ENCODE measurements at regions of chr11 and their contacts with region 1.

Region 1: DNA sequence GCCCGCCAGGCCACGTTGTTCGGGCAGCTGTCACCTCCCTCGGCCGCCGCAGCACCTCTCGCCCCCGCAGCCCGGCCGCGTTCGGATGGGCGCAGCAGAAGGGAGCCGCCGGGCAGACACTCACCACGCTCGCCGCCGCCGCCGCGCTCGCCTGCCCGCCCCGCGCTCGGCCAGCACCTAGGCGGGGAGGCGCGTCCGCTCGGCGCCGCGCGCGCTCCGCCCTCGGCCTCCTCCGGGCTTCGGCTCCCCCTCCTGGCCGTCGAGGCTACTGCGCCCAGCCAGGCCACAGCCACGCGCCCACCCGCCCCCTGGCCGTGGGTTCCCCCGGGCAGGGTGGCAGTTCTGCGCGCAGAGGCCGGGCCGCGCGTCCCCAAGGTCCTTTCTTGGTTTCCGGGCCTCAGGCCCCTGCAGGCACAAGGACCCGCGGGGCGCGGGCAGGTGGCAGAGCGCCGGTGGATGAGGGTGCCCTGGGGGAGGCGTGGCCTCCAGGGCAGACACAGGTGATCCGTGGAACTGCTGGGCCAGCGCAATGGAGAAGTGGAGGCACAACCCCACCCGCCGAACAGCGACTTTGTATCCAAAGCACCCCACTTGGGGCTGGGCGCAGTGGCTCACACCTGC is at the start of gene SLC25A22:
- DNase-seq: peak; percentile 94
- ATAC-seq: peak; percentile 78
- H3K4me3 ChIP-seq: peak within 1 kb of the TSS; percentile 19 to 95 (median 93)
- H3K4me3 Mint-ChIP-seq: peak within 1 kb of the TSS; percentile 95
- H3K27ac ChIP-seq: peak within 1 kb of the TSS; percentile 83 to 93
- H3K27ac Mint-ChIP-seq: peak within 1 kb of the TSS; percentile 92
- H3K4me1 ChIP-seq: peaks cover 17 to 35% of the 10 kb centered on the region in 2 donors
- H3K4me1 Mint-ChIP-seq: peaks cover 20% of the 10 kb centered on the region
- H3K27me3 ChIP-seq: no peaks in the 10 kb centered on the region
- H3K27me3 Mint-ChIP-seq: no peaks in the 10 kb centered on the region
- CTCF ChIP-seq: peak; percentile 85
- total RNA-seq, gene SLC25A22: 25.7 and 28.2 TPM in 2 replicates

Region 2: GRCh38 chr11:207208-207862 is 590.9 kb before region 1 on chr11 and contains the starts of genes BET1L and RIC8A:
- CTCF ChIA-PET with region 1: no interaction called
- POLR2A ChIA-PET with region 1: no interaction called
- intact Hi-C with region 1: loop called (anchors 5 kb)
- DNase-seq: peak; percentile 99
- ATAC-seq: peak; percentile 79
- H3K4me3 ChIP-seq: peak within 1 kb of the TSS; percentile 87 to 98 (median 91)
- H3K4me3 Mint-ChIP-seq: peak within 1 kb of the TSS; percentile 98
- H3K27ac ChIP-seq: peak within 1 kb of the TSS; percentile 96 to 98
- H3K27ac Mint-ChIP-seq: peak within 1 kb of the TSS; percentile 100
- H3K4me1 ChIP-seq: peaks cover 26 to 43% of the 10 kb centered on the region in 2 donors
- H3K4me1 Mint-ChIP-seq: peaks cover 53% of the 10 kb centered on the region
- H3K27me3 ChIP-seq: no peaks in the 10 kb centered on the region
- H3K27me3 Mint-ChIP-seq: no peaks in the 10 kb centered on the region
- CTCF ChIP-seq: no peak
- total RNA-seq, gene BET1L: 69.1 and 72.2 TPM in 2 replicates
- total RNA-seq, gene RIC8A: 102 and 110 TPM in 2 replicates

Region 3: GRCh38 chr11:727859-728748 is 70.1 kb before region 1 on chr11:
- CTCF ChIA-PET with region 1: interaction called, 5 read pairs
- POLR2A ChIA-PET with region 1: no interaction called
- intact Hi-C with region 1: loop called (anchors 5 kb)
- DNase-seq: peak; percentile 85
- ATAC-seq: peak; percentile 85
- H3K4me3 ChIP-seq: no peak overlapping the region
- H3K4me3 Mint-ChIP-seq: no peak overlapping the region
- H3K27ac ChIP-seq: no peak overlapping the region
- H3K27ac Mint-ChIP-seq: no peak overlapping the region
- H3K4me1 ChIP-seq: peaks cover 14 to 29% of the 10 kb centered on the region in 2 donors
- H3K4me1 Mint-ChIP-seq: peaks cover 12% of the 10 kb centered on the region
- H3K27me3 ChIP-seq: peaks cover 0 to 24% (median 0%) of the 10 kb centered on the region in 4 experiments
- H3K27me3 Mint-ChIP-seq: peaks cover 4% of the 10 kb centered on the region
- CTCF ChIP-seq: peak; percentile 97

Region 4: GRCh38 chr11:765025-765801 is 33.0 kb before region 1 on chr11:
- CTCF ChIA-PET with region 1: no interaction called
- POLR2A ChIA-PET with region 1: no interaction called
- intact Hi-C with region 1: no loop called
- DNase-seq: peak; percentile 81
- ATAC-seq: peak; percentile 86
- H3K4me3 ChIP-seq: no peak overlapping the region
- H3K4me3 Mint-ChIP-seq: no peak overlapping the region
- H3K27ac ChIP-seq: peak overlapping the region in 1 of 2 donors; percentile 12
- H3K27ac Mint-ChIP-seq: peak overlapping the region; percentile 50
- H3K4me1 ChIP-seq: no peaks in the 10 kb centered on the region
- H3K4me1 Mint-ChIP-seq: peaks cover 2% of the 10 kb centered on the region
- H3K27me3 ChIP-seq: no peaks in the 10 kb centered on the region
- H3K27me3 Mint-ChIP-seq: no peaks in the 10 kb centered on the region
- CTCF ChIP-seq: peak; percentile 74

Region 5: DNA sequence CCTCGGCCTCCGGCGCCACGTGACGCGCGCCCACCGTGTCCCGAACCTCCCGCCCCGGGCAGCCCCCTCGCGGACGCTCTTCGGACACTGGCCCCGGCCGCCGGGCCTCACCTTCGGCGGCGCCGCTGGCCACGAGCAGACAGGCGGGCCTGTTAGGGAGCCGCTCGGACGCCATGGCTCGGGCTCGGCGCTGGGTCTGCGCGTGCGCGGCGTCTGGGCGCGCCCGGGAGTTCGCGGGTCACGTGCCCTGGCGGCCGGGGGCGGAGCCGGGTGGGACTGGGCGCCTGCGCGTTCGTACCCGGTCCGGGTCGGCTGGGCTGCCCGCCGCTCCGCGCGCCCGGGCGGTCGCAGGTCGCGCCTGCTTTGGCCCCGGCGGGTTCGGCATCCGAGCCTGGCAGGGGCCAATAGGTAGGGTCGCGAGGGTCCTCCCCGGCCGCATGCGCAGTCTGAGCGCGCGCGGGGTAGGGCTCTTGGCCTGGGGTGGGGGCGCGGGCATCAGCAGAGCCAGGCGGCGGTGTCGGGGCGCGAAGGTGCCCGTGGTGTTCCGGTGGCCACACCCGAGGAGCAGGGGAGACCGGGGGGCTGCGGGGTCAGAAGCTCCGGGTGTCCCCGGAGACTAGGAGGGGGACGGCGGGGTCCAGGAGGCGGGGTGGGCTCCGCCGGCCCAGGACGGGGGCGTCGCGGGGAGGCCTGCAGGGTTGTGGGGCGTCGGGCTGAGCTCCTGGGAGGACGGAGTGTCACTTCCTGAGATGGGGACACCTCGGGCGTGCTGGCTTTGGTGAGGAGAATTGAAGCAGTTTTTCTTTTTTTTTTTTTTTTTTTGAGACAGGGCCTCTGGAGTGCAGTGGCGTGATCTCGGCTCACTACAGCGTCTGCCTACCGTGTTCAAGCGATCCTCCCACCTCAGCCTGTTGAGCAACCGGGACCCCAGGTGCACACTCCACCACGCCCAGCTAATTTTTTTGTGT is 20.6 kb before region 1 on chr11 and contains the start of gene GATD1:
- CTCF ChIA-PET with region 1: interaction called, 4 read pairs
- POLR2A ChIA-PET with region 1: interaction called, 6 read pairs
- intact Hi-C with region 1: loop called (anchors 1 kb)
- DNase-seq: peak; percentile 94
- ATAC-seq: peak; percentile 89
- H3K4me3 ChIP-seq: peak within 1 kb of the TSS; percentile 18 to 80 (median 73)
- H3K4me3 Mint-ChIP-seq: peak within 1 kb of the TSS; percentile 80
- H3K27ac ChIP-seq: peak within 1 kb of the TSS; percentile 12 to 76
- H3K27ac Mint-ChIP-seq: peak within 1 kb of the TSS; percentile 63
- H3K4me1 ChIP-seq: peaks cover 12 to 24% of the 10 kb centered on the region in 2 donors
- H3K4me1 Mint-ChIP-seq: peaks cover 18% of the 10 kb centered on the region
- H3K27me3 ChIP-seq: no peaks in the 10 kb centered on the region
- H3K27me3 Mint-ChIP-seq: no peaks in the 10 kb centered on the region
- CTCF ChIP-seq: no peak
- total RNA-seq, gene GATD1: 70.0 and 80.0 TPM in 2 replicates

Region 6: DNA sequence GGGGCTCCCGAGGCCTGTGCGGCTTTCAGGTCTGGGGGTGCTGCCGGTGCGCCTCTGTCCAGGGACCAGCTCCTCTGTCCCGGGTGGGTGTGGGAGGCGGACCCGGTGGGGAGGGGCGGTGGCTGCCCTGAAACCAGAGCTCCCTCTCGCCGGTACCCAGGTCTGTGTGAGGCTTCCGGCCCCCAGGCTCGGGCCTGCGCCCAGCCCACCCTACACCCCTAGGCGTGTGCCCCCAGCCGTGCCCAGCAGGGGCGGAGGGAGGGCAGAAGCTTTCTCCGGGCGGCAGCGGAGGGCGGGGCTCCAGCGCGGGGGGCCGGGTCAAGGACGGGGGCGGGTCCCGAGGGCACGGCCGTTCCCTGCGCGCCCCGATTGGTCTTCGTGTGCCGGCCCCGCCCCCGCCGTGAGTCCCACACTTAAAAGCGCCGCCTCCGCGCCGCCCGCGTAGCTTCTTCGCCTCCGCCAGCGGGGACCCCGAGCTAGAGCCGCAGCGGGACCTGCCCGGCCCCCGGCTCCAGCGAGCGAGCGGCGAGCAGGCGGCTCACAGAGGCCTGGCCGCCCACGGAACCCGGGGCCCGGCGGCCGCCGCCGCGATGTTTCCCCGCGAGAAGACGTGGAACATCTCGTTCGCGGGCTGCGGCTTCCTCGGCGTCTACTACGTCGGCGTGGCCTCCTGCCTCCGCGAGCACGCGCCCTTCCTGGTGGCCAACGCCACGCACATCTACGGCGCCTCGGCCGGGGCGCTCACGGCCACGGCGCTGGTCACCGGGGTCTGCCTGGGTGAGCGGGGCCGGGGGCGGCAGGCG is 21.1 kb after region 1 on chr11:
- CTCF ChIA-PET with region 1: interaction called, 4 read pairs
- POLR2A ChIA-PET with region 1: interaction called, 5 read pairs
- intact Hi-C with region 1: loop called (anchors 1 kb)
- DNase-seq: peak; percentile 96
- ATAC-seq: peak; percentile 81
- H3K4me3 ChIP-seq: peak overlapping the region in 4 of 5 experiments; percentile 58 to 82 (median 77)
- H3K4me3 Mint-ChIP-seq: peak overlapping the region; percentile 92
- H3K27ac ChIP-seq: peak overlapping the region; percentile 68 to 91
- H3K27ac Mint-ChIP-seq: peak overlapping the region; percentile 91
- H3K4me1 ChIP-seq: peaks cover 16 to 26% of the 10 kb centered on the region in 2 donors
- H3K4me1 Mint-ChIP-seq: peaks cover 20% of the 10 kb centered on the region
- H3K27me3 ChIP-seq: no peaks in the 10 kb centered on the region
- H3K27me3 Mint-ChIP-seq: no peaks in the 10 kb centered on the region
- CTCF ChIP-seq: peak; percentile 30

Region 7: GRCh38 chr11:1121813-1122663 is 323.8 kb after region 1 on chr11:
- CTCF ChIA-PET with region 1: no interaction called
- POLR2A ChIA-PET with region 1: no interaction called
- intact Hi-C with region 1: no loop called
- DNase-seq: peak; percentile 3
- ATAC-seq: no peak
- H3K4me3 ChIP-seq: no peak overlapping the region
- H3K4me3 Mint-ChIP-seq: no peak overlapping the region
- H3K27ac ChIP-seq: no peak overlapping the region
- H3K27ac Mint-ChIP-seq: no peak overlapping the region
- H3K4me1 ChIP-seq: no peaks in the 10 kb centered on the region
- H3K4me1 Mint-ChIP-seq: no peaks in the 10 kb centered on the region
- H3K27me3 ChIP-seq: no peaks in the 10 kb centered on the region
- H3K27me3 Mint-ChIP-seq: no peaks in the 10 kb centered on the region
- CTCF ChIP-seq: no peak

Measured in B cell (primary cell).